ENCODE measurements at regions of chr11 and their contacts with region 1.

Region 1: GRCh38 chr11:118051611-118052461 is 25.0 kb upstream of the TMPRSS4 start:
- DNase-seq: peak; percentile 42
- H3K4me3 ChIP-seq: no peak overlapping the region
- H3K27ac ChIP-seq: no peak overlapping the region
- H3K4me1 ChIP-seq: peaks cover 12% of the 10 kb centered on the region
- CTCF ChIP-seq: no peak

Region 2: DNA sequence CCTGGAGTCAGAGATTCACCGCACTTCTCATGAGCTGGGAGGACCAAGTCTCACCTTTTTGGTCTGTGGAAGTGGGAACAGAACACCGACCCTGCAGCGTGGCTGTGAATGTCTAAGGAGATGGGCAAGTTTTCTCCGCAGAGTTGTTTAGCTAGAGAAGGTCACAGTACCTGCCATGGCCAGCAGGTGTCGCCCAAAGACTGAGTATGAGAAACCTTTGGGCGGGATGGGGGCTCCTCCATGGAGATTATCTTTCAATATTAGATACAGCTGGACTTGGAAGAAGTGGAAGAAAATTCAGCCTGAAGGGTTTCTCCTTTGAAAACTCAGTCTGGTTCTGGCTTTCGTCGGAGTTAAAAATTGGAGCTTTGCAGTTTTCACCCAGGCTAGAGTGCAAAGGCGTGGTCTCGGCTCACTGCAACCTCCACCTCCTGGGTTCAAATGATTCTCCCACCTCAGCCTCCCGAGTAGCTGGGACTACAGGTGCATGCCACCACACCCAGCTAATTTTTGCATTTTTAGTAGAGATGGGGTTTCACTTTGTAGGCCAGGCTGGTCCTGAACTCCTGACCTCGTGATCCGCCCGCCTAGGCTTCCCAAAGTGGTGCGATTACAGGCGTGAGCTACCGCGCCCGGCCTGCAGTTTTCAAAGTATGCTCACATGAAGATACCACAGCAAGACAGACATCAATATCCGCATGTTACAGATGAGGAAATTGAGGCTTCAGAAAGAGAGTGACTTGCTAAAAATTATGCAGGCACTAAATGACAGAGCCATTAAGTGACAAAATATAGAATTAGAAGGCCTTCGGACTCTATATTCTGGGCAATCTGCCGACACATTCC is 244.1 kb before region 1 on chr11:
- CTCF ChIA-PET with region 1: interaction called, 7 read pairs
- POLR2A ChIA-PET with region 1: no interaction called
- intact Hi-C with region 1: loop called (anchors 1 kb)
- DNase-seq: peak; percentile 63
- H3K4me3 ChIP-seq: no peak overlapping the region
- H3K27ac ChIP-seq: no peak overlapping the region
- H3K4me1 ChIP-seq: no peaks in the 10 kb centered on the region
- CTCF ChIP-seq: peak; percentile 92

Region 3: GRCh38 chr11:117817368-117818040 is 234.3 kb before region 1 on chr11:
- CTCF ChIA-PET with region 1: no interaction called
- POLR2A ChIA-PET with region 1: no interaction called
- intact Hi-C with region 1: loop called (anchors 1 kb)
- DNase-seq: peak; percentile 64
- H3K4me3 ChIP-seq: no peak overlapping the region
- H3K27ac ChIP-seq: no peak overlapping the region
- H3K4me1 ChIP-seq: peaks cover 16% of the 10 kb centered on the region
- CTCF ChIP-seq: peak; percentile 98

Region 4: DNA sequence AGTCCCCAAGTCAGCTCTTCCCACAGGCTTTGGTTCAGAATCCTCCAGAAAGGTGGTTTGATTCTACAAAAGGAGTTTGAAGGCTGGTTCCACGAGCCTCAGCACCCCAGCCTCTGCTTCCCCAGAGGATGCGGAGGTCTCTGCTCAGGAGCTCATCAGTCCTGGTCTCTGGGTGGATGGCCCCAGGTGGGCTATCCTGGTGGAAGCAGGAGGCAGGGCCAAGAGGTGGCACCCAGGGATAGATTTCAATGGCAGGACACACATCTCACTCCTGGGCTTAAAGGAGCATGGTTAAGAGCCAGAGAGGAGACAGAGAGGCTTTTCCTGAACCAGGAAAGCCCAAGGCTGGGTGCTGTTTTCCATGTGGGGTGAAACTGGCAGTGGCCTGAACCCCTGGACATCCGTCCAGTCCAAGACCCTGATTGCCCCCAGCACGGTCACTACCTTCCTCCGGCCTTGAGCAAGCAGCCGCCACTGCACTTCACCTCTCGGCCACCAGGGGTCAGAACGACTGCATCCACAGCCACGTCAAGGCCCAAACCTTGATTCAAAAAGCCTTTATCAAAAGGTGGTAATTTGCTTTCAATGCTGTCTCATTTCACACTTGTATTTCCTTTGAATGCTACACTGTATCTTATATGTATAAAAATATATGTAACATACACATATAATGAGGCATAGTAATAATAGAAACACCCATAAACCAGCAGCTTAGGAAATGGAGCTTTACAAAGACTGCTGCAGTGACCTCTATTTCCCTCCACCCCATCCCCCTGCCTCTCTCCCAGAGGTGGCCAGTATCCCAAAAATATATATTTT is 208.0 kb before region 1 on chr11:
- CTCF ChIA-PET with region 1: interaction called, 3 read pairs
- POLR2A ChIA-PET with region 1: no interaction called
- intact Hi-C with region 1: loop called (anchors 1 kb)
- DNase-seq: peak; percentile 67
- H3K4me3 ChIP-seq: no peak overlapping the region
- H3K27ac ChIP-seq: no peak overlapping the region
- H3K4me1 ChIP-seq: no peaks in the 10 kb centered on the region
- CTCF ChIP-seq: peak; percentile 96

Region 5: GRCh38 chr11:117946842-117947526 is 104.9 kb before region 1 on chr11:
- CTCF ChIA-PET with region 1: interaction called, 10 read pairs
- POLR2A ChIA-PET with region 1: interaction called, 6 read pairs
- intact Hi-C with region 1: loop called (anchors 1 kb)
- DNase-seq: peak; percentile 76
- H3K4me3 ChIP-seq: no peak overlapping the region
- H3K27ac ChIP-seq: no peak overlapping the region
- H3K4me1 ChIP-seq: peaks cover 22% of the 10 kb centered on the region
- CTCF ChIP-seq: peak; percentile 98

Region 6: DNA sequence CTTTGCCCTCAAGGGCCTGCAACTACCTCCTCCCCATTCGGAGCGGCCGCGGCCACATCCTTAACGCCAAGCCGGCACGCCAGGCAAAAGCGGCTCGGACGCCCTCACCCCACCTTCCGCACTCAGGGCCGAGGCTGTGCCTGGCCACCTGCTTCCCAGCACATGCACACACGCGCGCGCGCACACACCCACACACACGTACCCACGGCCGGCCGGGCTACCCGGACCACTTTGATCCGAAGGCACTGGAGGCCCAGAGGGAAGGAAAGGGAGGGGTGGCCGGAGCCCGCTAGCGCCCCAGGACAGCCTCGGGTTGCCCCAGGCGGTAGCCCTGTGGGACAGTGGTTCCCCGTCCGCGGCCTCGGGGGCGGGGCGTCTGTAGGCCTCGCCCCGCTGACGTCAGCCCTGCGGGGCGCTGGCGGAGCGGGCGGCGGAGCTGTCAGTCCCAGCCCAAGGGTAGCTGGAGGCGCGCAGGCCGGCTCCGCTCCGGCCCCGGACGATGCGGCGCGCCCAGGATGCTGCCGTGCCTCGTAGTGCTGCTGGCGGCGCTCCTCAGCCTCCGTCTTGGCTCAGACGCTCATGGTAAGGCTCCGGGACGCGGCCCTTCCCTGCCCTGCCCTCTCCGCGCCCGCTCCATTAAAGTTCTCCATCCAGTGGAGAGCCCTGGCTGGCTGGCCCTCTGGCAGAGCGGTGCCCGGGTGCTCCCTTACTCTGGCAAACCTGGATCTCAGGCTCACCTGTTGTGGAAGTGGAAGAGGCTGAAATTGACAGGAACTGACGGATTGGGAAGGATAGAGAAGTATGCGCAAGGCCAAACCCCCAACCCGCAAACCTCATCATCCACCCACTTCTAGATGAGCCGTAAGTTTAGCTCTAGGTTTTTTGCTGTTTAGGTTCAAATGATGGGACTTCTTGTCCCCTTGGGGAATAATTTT is 65.6 kb before region 1 on chr11 and contains the start of gene IL10RA:
- CTCF ChIA-PET with region 1: interaction called, 3 read pairs
- POLR2A ChIA-PET with region 1: interaction called, 4 read pairs
- intact Hi-C with region 1: loop called (anchors 2 kb)
- DNase-seq: peak; percentile 92
- H3K4me3 ChIP-seq: peak within 1 kb of the TSS; percentile 78
- H3K27ac ChIP-seq: peak within 1 kb of the TSS; percentile 44
- H3K4me1 ChIP-seq: peaks cover 35% of the 10 kb centered on the region
- CTCF ChIP-seq: peak; percentile 34
- total RNA-seq, gene IL10RA: 8.2 and 15.7 TPM in 2 replicates

Region 7: GRCh38 chr11:118010738-118011461 is 40.9 kb before region 1 on chr11:
- CTCF ChIA-PET with region 1: no interaction called
- POLR2A ChIA-PET with region 1: interaction called, 6 read pairs
- intact Hi-C with region 1: loop called (anchors 2 kb)
- DNase-seq: peak; percentile 93
- H3K4me3 ChIP-seq: peak overlapping the region; percentile 54
- H3K27ac ChIP-seq: peak overlapping the region; percentile 99
- H3K4me1 ChIP-seq: peaks cover 82% of the 10 kb centered on the region
- CTCF ChIP-seq: no peak